ENCODE measurements at regions of chr19 and their contacts with region 1.

Region 1: GRCh38 chr19:49097455-49098288 is 12.4 kb downstream of the SNRNP70 start:
- DNase-seq: peak; percentile 80

Region 2: DNA sequence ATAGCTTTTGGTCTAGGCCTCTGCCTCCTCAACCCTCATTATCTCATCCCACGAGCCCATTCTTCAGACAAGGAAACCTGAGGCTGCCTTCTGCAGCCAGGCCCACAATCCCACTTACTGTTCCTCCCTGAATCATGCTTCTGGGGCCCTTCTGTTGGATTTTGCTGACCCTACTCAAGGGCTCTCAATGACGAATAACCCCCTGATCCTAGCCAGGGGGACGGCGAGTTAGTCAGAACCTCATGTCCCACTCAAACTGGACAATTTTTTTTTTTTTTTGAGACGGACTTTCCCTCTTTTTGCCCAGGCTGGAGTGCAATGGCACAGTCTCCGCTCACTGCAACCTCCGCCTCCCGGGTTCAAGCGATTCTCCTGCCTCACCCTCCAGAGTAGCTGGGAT is 75.6 kb before region 1 on chr19:
- CTCF ChIA-PET with region 1: no interaction called
- POLR2A ChIA-PET with region 1: no interaction called
- DNase-seq: no peak

Region 3: GRCh38 chr19:49073514-49074378 is 23.9 kb before region 1 on chr19:
- CTCF ChIA-PET with region 1: interaction called, 10 read pairs
- POLR2A ChIA-PET with region 1: no interaction called
- DNase-seq: peak; percentile 70

Region 4: GRCh38 chr19:49113762-49114629 is 16.3 kb after region 1 on chr19 and contains the start of gene LIN7B:
- CTCF ChIA-PET with region 1: interaction called, 13 read pairs
- POLR2A ChIA-PET with region 1: interaction called, 8 read pairs
- DNase-seq: peak; percentile 86

Region 5: DNA sequence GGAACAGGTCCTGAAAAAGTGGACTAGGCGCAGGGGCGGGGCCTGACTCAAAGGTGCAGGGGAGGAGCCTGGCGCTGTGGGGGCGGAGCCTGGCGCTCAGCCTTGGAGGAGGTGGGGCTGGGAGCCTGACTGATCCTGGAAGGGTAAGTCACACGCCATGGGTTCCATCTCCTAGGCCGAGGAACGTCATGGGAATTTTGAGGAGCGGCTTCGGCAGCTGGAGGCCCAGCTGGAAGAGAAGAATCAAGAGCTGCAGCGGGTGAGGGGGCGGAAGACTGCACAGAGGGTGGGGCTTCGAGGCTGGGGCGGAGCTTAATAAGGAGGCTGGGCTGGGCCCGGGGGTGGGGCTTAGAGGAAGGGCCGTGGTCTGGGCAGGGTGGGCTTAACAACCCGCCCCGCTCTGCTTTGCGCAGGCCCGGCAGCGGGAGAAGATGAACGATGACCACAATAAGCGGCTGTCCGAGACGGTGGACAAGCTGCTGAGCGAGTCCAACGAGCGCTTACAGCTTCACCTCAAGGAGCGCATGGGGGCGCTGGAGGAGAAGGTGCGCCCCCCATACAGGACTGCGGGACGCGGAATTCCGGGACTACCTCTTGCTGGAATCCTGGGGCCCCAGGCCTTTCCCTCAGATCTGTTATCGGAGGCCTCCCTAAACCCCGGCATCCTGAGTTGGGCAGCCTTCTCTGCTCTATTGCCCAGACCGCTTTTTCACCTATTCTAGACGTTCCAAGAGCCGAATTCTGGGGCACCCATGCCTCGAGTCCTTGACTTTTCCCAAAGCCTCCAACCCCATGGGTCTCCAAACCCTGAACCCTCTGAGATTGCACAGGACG is 36.2 kb after region 1 on chr19:
- CTCF ChIA-PET with region 1: no interaction called
- POLR2A ChIA-PET with region 1: no interaction called
- DNase-seq: peak; percentile 27

Region 6: DNA sequence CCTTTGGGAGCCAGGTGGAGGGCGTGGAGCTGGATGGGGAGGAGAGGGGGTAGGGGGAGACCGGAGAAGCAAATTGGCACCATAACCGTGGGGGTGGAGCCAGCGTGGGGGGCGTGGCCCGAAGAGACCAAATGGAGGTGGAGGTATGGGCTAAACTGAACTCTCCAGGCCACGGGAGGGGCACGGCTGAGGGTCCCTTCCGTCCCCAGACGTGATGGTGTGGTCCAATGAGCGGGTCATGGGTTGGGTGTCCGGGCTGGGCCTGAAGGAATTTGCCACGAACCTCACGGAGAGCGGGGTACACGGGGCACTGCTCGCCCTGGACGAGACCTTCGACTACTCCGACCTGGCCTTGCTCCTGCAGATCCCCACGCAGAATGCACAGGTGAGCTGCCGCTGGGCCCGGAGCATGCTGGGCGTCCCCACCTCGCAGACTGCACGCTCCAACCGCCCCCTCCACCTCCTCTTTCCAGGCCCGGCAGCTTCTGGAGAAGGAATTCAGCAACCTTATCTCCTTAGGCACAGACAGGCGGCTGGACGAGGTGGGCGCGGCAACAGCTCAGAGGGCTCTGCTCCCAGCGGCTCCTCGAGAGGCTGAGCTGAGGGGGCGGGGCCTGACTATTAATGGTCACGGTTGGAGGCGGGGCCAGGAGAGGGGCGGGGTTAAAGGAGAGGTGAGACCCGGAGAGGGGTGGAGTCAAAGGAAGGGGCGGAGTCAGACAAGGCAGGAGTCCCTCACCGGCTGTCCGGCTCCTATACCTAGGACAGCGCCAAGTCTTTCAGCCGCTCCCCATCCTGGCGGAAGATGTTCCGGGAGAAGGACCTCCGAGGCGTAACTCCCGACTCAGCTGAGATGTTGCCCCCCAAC is 51.3 kb after region 1 on chr19:
- CTCF ChIA-PET with region 1: interaction called, 11 read pairs
- POLR2A ChIA-PET with region 1: interaction called, 8 read pairs
- DNase-seq: peak; percentile 93

Region 7: DNA sequence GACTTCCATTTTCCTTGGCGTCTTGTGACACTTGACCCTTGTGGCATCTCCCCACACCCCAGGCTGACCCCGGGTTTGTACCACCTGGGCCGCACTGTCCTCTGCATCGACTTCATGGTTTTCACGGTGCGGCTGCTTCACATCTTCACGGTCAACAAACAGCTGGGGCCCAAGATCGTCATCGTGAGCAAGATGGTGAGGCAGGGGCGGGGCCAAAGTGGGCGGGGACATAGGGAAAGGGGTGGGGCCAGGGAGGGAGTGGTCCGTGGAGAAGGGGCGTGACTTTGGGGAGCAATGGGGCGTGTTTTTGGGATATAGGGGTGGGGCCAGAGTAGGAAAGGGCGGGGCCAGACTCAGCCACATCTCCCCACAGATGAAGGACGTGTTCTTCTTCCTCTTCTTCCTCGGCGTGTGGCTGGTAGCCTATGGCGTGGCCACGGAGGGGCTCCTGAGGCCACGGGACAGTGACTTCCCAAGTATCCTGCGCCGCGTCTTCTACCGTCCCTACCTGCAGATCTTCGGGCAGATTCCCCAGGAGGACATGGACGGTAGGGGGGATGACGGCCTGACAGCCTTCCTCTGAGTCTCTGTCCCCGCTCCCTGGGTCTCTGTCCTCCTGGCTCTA is 102.7 kb after region 1 on chr19:
- CTCF ChIA-PET with region 1: interaction called, 19 read pairs
- POLR2A ChIA-PET with region 1: interaction called, 3 read pairs
- DNase-seq: peak; percentile 69

Measured in HEK293T (cell line).